Mammary epithelial cell (primary cell): ENCODE measurements at regions of chr17 and their contacts with region 1.

Region 1: GRCh38 chr17:50361561-50362480 is 11.2 kb downstream of the MRPL27 start:
- DNase-seq: peak; percentile 46
- H3K4me3 ChIP-seq: no peak overlapping the region
- H3K27ac ChIP-seq: no peak overlapping the region
- H3K4me1 ChIP-seq: no peaks in the 10 kb centered on the region
- H3K27me3 ChIP-seq: no peaks in the 10 kb centered on the region
- CTCF ChIP-seq: peak; percentile 81

Region 2: DNA sequence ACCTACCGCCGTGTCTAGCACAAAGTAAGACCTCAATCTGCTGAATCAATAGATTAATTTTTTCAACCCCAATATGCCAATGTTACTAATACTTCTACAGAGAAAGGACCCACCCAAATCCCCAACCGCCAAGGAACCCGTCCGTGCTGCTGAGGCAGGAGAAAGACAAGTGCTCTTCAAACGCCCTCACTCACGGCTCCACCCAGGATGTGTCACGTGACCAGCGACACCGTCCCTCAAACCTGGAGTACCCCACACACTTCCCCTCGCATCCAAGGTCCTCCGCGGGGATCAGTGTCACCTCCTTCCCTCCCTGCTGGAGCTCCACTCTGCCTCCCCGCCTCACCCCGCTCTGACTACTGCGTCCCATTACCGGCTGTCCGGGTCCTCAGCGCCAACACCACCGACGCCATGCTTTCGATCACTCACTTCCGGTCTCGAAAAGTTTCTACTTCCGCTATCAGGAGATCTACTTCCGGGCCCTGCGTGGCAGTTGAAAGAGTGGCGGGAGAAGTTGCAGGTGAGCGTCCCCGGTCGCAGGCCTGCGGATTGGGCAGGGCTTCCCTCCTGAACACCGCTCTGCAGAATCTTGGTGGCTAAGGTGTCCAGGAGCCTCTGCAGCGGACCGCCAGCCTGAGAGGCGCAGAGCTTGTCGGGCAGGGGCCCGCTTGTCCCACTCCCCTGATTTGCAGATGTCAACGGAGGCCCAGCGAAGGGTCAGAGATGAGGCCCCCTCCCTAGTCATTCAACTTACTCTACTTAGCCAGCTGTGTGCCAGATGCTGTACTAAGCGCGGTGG is 11.1 kb after region 1 on chr17 and contains the starts of genes EME1 and MRPL27:
- CTCF ChIA-PET with region 1: interaction called, 50 read pairs
- dilution Hi-C with region 1: no loop called
- in situ Hi-C with region 1: no loop called
- intact Hi-C with region 1: no loop called
- DNase-seq: peak; percentile 89
- H3K4me3 ChIP-seq: peak within 1 kb of the TSS; percentile 88 to 98 (median 92)
- H3K27ac ChIP-seq: peak within 1 kb of the TSS; percentile 84
- H3K4me1 ChIP-seq: peaks cover 13% of the 10 kb centered on the region
- H3K27me3 ChIP-seq: no peaks in the 10 kb centered on the region
- CTCF ChIP-seq: no peak
- total RNA-seq, gene EME1: 0.17 to 8.0 TPM
- total RNA-seq, gene MRPL27: 43.5 to 73.5 TPM